Right cardiac atrium (tissue), 5 donors: ENCODE measurements at regions of chr12 and their contacts with region 1.

Region 1: GRCh38 chr12:13100882-13101769 is 2.3 kb downstream of the GSG1 start:
- DNase-seq: peak; percentile 96 to 97 (median 97)
- ATAC-seq: peak; percentile 91 to 93
- H3K4me3 ChIP-seq: peak overlapping the region; percentile 23
- H3K27ac ChIP-seq: peak overlapping the region; percentile 97
- H3K4me1 ChIP-seq: peaks cover 13% of the 10 kb centered on the region
- H3K27me3 ChIP-seq: no peaks in the 10 kb centered on the region

Region 2: GRCh38 chr12:13148064-13148847 is 47.1 kb after region 1 on chr12:
- intact Hi-C with region 1: loop called in 2 of 4 experiments (anchors 5 to 10 kb)
- DNase-seq: peak; percentile 35 to 77 (median 72)
- ATAC-seq: peak; percentile 39 to 60
- H3K4me3 ChIP-seq: no peak overlapping the region
- H3K27ac ChIP-seq: peak overlapping the region; percentile 50
- H3K4me1 ChIP-seq: peaks cover 3% of the 10 kb centered on the region
- H3K27me3 ChIP-seq: no peaks in the 10 kb centered on the region

Region 3: GRCh38 chr12:13154027-13154538 is 53.0 kb after region 1 on chr12:
- intact Hi-C with region 1: loop called in 2 of 4 experiments (anchors 5 to 10 kb)
- DNase-seq: no peak
- ATAC-seq: no peak
- H3K4me3 ChIP-seq: no peak overlapping the region
- H3K27ac ChIP-seq: no peak overlapping the region
- H3K4me1 ChIP-seq: peaks cover 1% of the 10 kb centered on the region
- H3K27me3 ChIP-seq: no peaks in the 10 kb centered on the region

Region 4: DNA sequence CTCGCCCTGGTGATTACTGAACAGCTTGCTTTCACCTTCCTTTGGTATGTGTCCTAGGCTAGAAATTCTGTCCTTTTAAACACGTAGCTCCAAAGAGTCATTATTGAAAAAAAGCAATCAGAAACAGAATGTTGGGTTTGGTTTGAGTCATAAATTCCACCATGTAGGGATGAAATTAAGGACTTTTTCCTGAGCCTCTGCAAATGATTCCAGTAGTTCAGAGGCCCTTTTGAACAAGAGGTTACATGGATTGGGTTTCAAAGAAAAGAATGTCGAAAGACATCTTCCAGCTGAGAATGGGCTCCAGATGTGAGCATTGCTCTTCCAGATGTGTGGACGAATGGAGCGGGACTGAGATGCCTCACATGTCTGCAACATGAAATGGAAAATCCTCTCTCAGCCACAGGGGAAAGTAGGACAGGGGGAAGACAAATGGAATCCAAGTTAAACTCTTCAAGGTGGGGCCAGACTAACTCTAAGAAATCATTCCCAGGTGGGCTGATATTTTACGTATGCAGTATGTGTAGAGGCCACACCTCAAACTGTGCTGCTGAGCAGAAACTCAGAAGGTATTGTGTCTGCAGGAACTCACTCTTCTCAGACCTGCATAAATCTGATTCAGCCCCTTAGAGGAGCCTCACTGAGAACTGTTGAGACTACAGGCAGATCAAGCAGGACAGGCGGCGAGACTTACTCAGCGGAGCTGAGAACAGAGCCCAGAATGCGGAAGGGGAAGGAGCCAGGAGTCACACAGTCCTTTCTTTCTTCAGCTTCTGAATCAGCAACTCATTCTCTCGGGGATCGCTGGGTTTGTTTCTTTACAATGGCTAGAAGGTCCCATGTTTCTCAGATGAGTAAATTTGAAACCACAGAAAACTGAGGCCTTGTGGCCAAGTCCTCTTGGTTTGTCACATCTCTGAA is 72.1 kb after region 1 on chr12:
- intact Hi-C with region 1: no loop called
- DNase-seq: peak; percentile 79 to 82 (median 81)
- ATAC-seq: peak; percentile 90 to 91
- H3K4me3 ChIP-seq: no peak overlapping the region
- H3K27ac ChIP-seq: peak overlapping the region; percentile 70
- H3K4me1 ChIP-seq: peaks cover 6% of the 10 kb centered on the region
- H3K27me3 ChIP-seq: no peaks in the 10 kb centered on the region

Region 5: GRCh38 chr12:13196130-13196921 is 95.2 kb after region 1 on chr12 and contains the start of gene EMP1:
- intact Hi-C with region 1: loop called in 2 of 4 experiments (anchors 5 kb)
- DNase-seq: peak; percentile 94 to 97 (median 97)
- ATAC-seq: peak; percentile 90 to 92
- H3K4me3 ChIP-seq: peak within 1 kb of the TSS; percentile 63
- H3K27ac ChIP-seq: peak within 1 kb of the TSS; percentile 99
- H3K4me1 ChIP-seq: peaks cover 14% of the 10 kb centered on the region
- H3K27me3 ChIP-seq: no peaks in the 10 kb centered on the region
- total RNA-seq, gene EMP1: 134 to 401 (median 261) TPM

Region 6: DNA sequence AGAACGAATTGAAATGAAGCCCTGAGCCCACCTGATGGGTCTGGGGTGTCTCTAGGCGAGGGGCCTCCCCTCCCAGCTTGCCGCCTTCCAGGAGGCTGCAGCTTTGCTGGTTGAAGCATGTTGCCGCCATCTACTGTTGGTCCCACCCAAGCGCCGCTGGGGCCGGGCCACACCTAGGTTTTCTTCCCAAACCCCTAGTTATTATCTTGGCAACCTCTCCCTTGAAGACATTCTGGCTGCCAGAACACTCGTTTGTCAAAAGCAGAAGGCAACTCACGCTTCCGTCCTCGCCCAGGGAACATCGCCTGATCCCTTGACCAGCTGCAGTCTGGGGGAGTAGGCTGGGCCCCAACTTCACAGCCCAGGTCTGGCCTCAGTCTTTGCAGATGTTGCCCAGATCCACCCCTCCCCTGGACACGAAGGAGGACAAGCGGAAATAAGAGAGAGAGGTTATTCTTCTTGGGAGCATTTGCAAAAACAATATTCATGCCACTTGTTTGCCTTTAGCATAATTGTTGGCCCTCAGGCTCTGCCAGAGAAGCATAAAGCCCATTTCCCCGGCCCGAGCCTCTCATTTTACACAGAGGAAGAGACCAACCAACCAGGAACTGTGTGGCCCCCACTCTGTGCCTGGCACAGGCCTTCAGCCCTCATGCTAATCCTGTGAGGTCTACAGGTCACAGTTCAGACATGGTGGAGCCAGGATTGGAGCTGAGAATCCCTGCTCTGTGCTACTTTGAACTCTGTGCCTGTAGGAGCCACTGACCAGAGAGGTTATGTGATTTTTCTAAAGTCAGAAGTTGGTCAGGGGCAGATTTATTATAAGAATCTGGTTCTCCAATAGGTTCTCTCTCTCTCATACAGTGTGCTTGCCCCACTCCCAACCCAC is 102.2 kb after region 1 on chr12:
- intact Hi-C with region 1: loop called in 2 of 4 experiments (anchors 5 kb)
- DNase-seq: peak; percentile 65 to 87 (median 85)
- ATAC-seq: peak; percentile 60 to 63
- H3K4me3 ChIP-seq: peak overlapping the region; percentile 9
- H3K27ac ChIP-seq: peak overlapping the region; percentile 71
- H3K4me1 ChIP-seq: peaks cover 24% of the 10 kb centered on the region
- H3K27me3 ChIP-seq: no peaks in the 10 kb centered on the region

Region 7: DNA sequence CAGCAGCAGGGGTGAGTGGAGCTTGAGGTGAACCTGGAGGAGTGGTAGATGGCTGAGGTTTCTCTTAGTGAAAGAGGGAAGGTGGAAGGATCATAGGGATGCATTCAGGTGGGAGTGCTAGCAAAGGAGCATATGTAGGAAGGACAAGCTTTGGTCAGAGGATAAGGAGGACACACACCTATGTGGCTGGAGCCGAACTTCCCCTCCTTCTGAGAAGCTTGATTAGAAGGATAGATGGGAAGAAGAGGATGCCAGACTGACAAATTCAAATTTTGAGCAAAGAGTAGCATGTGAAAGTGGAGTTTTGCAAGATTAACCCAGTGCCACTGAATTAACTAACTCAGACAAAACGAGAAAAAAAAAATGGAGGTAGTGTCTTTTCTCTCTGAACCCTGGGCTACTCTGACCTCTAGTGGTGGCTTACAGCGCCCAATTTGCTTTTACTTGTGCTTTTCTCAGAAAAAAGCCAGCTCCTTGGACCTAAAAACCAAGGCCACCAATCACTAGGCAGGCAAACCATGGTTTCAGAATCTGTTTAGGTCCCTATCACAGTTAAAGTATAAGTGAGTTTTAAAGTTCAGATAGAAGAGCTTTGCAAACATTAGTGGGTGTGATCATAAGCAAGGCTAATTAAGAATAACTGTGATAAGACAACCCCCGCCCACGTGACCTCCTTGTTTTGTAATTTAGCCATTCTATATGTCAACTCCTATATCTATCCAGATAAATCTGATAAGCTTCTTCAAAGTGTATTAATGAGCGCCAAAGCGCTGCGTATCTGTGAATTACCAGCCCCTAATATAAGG is 110.9 kb after region 1 on chr12:
- intact Hi-C with region 1: loop called in 3 of 4 experiments (anchors 5 kb)
- DNase-seq: peak in 2 of 3 donors; percentile 33 to 69
- ATAC-seq: peak in 1 of 2 donors; percentile 13
- H3K4me3 ChIP-seq: no peak overlapping the region
- H3K27ac ChIP-seq: peak overlapping the region; percentile 48
- H3K4me1 ChIP-seq: peaks cover 15% of the 10 kb centered on the region
- H3K27me3 ChIP-seq: no peaks in the 10 kb centered on the region

Region 8: GRCh38 chr12:13631873-13632272 is 530.7 kb after region 1 on chr12:
- intact Hi-C with region 1: no loop called
- DNase-seq: no peak
- ATAC-seq: no peak
- H3K4me3 ChIP-seq: no peak overlapping the region
- H3K27ac ChIP-seq: no peak overlapping the region
- H3K4me1 ChIP-seq: no peaks in the 10 kb centered on the region
- H3K27me3 ChIP-seq: no peaks in the 10 kb centered on the region